ENCODE measurements at regions of chr11 and their contacts with region 1.

Region 1: GRCh38 chr11:8699903-8700302 is 17.3 kb downstream of the RPL27A start:
- DNase-seq: no peak
- H3K4me3 ChIP-seq: no peak overlapping the region
- H3K27ac ChIP-seq: no peak overlapping the region
- H3K4me1 ChIP-seq: no peaks in the 10 kb centered on the region
- H3K27me3 ChIP-seq: no peaks in the 10 kb centered on the region
- CTCF ChIP-seq: no peak

Region 2: GRCh38 chr11:8652140-8652539 is 47.8 kb before region 1 on chr11:
- intact Hi-C with region 1: no loop called
- DNase-seq: no peak
- H3K4me3 ChIP-seq: no peak overlapping the region
- H3K27ac ChIP-seq: no peak overlapping the region
- H3K4me1 ChIP-seq: no peaks in the 10 kb centered on the region
- H3K27me3 ChIP-seq: no peaks in the 10 kb centered on the region
- CTCF ChIP-seq: no peak

Region 3: GRCh38 chr11:9092853-9093778 is 393.2 kb after region 1 on chr11:
- intact Hi-C with region 1: loop called (anchors 5 kb)
- DNase-seq: no peak
- H3K4me3 ChIP-seq: no peak overlapping the region
- H3K27ac ChIP-seq: no peak overlapping the region
- H3K4me1 ChIP-seq: peaks cover 8% of the 10 kb centered on the region
- H3K27me3 ChIP-seq: no peaks in the 10 kb centered on the region
- CTCF ChIP-seq: no peak